Calu3 (cell line): ENCODE measurements at regions of chr15 and their contacts with region 1.

Region 1: GRCh38 chr15:56496635-56497034 is 31.7 kb upstream of the MNS1 start:
- DNase-seq: peak; percentile 20
- H3K4me3 Mint-ChIP-seq: peak overlapping the region; percentile 48
- H3K27ac Mint-ChIP-seq: peak overlapping the region; percentile 54
- H3K4me1 Mint-ChIP-seq: peaks cover 31% of the 10 kb centered on the region
- H3K27me3 Mint-ChIP-seq: no peaks in the 10 kb centered on the region
- CTCF ChIP-seq: peak; percentile 67

Region 2: DNA sequence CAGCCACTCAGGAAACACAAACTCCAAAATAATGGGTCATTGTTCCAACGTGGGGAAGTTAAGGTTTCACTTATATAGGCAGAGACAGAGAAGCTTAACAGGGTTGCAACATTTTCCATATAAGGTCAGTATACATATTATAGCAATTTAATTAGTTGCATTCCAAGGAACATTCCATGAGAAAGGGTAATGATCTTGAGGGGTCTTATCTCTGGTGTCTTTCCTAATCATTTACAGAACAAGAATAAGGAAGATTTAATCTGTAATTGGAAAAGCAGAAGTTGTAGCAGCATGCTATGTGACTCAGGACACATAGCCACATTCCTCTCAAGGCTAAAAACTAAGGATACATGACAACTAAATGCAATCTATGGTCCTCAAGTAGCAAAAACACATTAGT is 36.6 kb before region 1 on chr15:
- CTCF ChIA-PET with region 1: no interaction called
- intact Hi-C with region 1: no loop called
- DNase-seq: no peak
- H3K4me3 Mint-ChIP-seq: no peak overlapping the region
- H3K27ac Mint-ChIP-seq: peak overlapping the region; percentile 50
- H3K4me1 Mint-ChIP-seq: peaks cover 9% of the 10 kb centered on the region
- H3K27me3 Mint-ChIP-seq: no peaks in the 10 kb centered on the region
- CTCF ChIP-seq: no peak

Region 3: DNA sequence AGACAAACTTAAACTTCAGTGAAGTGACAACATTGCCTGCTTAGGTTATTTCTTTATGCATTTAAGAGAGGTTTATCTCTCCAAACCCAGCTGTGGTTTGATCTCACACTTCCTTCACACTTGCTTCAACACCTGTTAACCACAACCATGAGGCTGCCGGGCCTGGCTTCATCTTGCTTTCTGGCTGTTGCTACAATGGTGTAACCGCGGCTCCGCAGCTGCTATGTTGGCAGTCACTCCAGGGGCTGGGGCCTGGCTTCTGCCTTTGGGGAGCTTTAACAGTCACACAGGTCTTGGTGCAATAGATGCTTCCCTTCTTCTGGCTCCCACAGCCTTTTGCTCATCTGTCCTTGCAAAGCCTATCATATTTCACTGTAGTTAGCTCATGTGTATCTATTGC is 41.2 kb after region 1 on chr15:
- CTCF ChIA-PET with region 1: no interaction called
- intact Hi-C with region 1: no loop called
- DNase-seq: no peak
- H3K4me3 Mint-ChIP-seq: no peak overlapping the region
- H3K27ac Mint-ChIP-seq: no peak overlapping the region
- H3K4me1 Mint-ChIP-seq: no peaks in the 10 kb centered on the region
- H3K27me3 Mint-ChIP-seq: no peaks in the 10 kb centered on the region
- CTCF ChIP-seq: no peak

Region 4: DNA sequence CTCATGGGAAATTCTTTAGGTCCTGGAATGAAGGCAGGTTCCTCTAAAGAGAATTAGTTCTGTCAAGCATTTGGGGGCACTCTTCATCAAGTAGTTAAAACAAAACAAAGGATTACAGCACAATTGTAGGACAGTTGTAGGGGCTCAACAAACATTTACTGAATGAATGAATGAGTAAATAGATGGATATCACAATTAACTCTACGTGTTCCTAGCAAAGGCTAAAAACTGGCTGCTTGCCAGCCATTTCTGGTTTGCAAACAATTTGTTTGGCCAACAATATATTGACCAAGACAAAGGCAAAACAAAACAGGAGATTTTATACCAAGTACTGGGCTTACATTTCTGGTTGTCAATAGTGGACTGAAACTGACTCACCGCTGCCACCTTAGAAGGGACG is 119.9 kb after region 1 on chr15:
- CTCF ChIA-PET with region 1: no interaction called
- intact Hi-C with region 1: no loop called
- DNase-seq: no peak
- H3K4me3 Mint-ChIP-seq: no peak overlapping the region
- H3K27ac Mint-ChIP-seq: no peak overlapping the region
- H3K4me1 Mint-ChIP-seq: peaks cover 8% of the 10 kb centered on the region
- H3K27me3 Mint-ChIP-seq: no peaks in the 10 kb centered on the region
- CTCF ChIP-seq: no peak

Region 5: DNA sequence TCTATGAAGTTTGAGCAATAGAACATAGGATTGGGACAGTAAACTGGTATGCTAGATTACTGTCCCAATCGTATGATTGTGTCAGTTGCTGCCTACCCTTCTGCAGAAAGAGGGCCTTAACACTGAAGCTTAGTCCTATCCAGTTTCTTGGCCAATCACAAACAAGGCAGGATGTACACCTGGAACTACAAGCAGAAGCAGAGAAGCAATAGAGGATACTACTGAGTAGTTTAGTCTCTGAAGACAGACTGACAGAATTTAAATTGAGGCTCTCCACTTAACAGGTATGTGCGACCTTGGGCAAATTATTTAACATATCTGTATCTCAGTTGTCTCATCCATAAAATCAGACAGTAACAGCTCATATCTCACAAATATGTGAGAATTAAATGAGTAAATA is 151.7 kb after region 1 on chr15:
- CTCF ChIA-PET with region 1: no interaction called
- intact Hi-C with region 1: no loop called
- DNase-seq: no peak
- H3K4me3 Mint-ChIP-seq: no peak overlapping the region
- H3K27ac Mint-ChIP-seq: no peak overlapping the region
- H3K4me1 Mint-ChIP-seq: no peaks in the 10 kb centered on the region
- H3K27me3 Mint-ChIP-seq: no peaks in the 10 kb centered on the region
- CTCF ChIP-seq: no peak

Region 6: GRCh38 chr15:56815247-56815646 is 318.6 kb after region 1 on chr15:
- CTCF ChIA-PET with region 1: no interaction called
- intact Hi-C with region 1: loop called (anchors 2 kb)
- DNase-seq: peak; percentile 86
- H3K4me3 Mint-ChIP-seq: no peak overlapping the region
- H3K27ac Mint-ChIP-seq: peak overlapping the region; percentile 69
- H3K4me1 Mint-ChIP-seq: peaks cover 45% of the 10 kb centered on the region
- H3K27me3 Mint-ChIP-seq: no peaks in the 10 kb centered on the region
- CTCF ChIP-seq: no peak

Region 7: GRCh38 chr15:56869573-56869972 is 372.9 kb after region 1 on chr15:
- CTCF ChIA-PET with region 1: interaction called, 8 read pairs
- intact Hi-C with region 1: loop called (anchors 2 kb)
- DNase-seq: peak; percentile 65
- H3K4me3 Mint-ChIP-seq: no peak overlapping the region
- H3K27ac Mint-ChIP-seq: no peak overlapping the region
- H3K4me1 Mint-ChIP-seq: peaks cover 33% of the 10 kb centered on the region
- H3K27me3 Mint-ChIP-seq: no peaks in the 10 kb centered on the region
- CTCF ChIP-seq: peak; percentile 46

Region 8: GRCh38 chr15:57138349-57138788 is 641.7 kb after region 1 on chr15:
- CTCF ChIA-PET with region 1: no interaction called
- intact Hi-C with region 1: loop called (anchors 5 kb)
- DNase-seq: peak; percentile 59
- H3K4me3 Mint-ChIP-seq: no peak overlapping the region
- H3K27ac Mint-ChIP-seq: no peak overlapping the region
- H3K4me1 Mint-ChIP-seq: peaks cover 5% of the 10 kb centered on the region
- H3K27me3 Mint-ChIP-seq: no peaks in the 10 kb centered on the region
- CTCF ChIP-seq: peak; percentile 79

Region 9: GRCh38 chr15:57213862-57214261 is 717.2 kb after region 1 on chr15:
- CTCF ChIA-PET with region 1: no interaction called
- intact Hi-C with region 1: loop called (anchors 2 kb)
- DNase-seq: no peak
- H3K4me3 Mint-ChIP-seq: no peak overlapping the region
- H3K27ac Mint-ChIP-seq: peak overlapping the region; percentile 25
- H3K4me1 Mint-ChIP-seq: peaks cover 50% of the 10 kb centered on the region
- H3K27me3 Mint-ChIP-seq: no peaks in the 10 kb centered on the region
- CTCF ChIP-seq: no peak

Region 10: DNA sequence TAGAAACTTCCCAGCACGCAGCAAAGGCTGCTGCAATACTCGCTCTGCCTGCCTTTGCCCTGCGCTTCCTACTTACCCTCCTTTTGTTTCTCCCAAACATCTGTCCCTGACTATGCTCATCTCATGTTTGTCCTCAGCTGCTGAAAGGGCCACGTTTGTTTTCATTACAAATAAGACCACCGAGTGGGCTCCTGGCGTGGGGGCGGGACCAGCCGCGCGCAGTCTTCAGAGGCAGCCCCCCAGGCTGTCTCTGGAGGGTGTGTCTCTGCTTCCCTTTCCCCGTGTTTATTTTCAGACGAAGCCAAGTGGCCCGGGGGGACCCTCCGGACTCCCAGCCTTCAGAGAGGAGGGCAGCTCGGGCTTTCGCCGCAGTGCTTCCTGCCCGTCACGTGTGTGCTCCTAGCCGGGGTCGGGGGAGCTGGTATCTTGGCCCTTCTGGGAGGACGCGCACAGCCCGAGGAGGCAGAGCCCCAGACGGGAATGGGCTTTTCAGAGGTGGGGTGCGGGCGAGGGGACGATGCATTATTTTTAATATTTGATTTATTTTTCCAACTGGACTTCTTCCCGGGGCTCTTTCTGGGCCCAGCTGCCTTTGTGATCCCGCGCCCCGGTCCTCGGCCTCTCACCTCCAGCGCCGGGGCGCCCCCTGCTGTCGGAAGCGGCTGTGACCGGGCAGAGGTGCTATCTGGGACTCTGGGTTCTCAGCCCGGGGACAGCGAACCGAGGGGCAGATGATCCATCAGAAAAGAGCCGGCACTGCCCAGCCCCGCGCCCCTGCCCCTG is 809.7 kb after region 1 on chr15:
- CTCF ChIA-PET with region 1: interaction called, 7 read pairs
- intact Hi-C with region 1: loop called (anchors 2 kb)
- DNase-seq: peak; percentile 97
- H3K4me3 Mint-ChIP-seq: peak overlapping the region; percentile 69
- H3K27ac Mint-ChIP-seq: no peak overlapping the region
- H3K4me1 Mint-ChIP-seq: peaks cover 8% of the 10 kb centered on the region
- H3K27me3 Mint-ChIP-seq: no peaks in the 10 kb centered on the region
- CTCF ChIP-seq: peak; percentile 97